ENCODE measurements at regions of chr17 and their contacts with region 1.

Region 1: DNA sequence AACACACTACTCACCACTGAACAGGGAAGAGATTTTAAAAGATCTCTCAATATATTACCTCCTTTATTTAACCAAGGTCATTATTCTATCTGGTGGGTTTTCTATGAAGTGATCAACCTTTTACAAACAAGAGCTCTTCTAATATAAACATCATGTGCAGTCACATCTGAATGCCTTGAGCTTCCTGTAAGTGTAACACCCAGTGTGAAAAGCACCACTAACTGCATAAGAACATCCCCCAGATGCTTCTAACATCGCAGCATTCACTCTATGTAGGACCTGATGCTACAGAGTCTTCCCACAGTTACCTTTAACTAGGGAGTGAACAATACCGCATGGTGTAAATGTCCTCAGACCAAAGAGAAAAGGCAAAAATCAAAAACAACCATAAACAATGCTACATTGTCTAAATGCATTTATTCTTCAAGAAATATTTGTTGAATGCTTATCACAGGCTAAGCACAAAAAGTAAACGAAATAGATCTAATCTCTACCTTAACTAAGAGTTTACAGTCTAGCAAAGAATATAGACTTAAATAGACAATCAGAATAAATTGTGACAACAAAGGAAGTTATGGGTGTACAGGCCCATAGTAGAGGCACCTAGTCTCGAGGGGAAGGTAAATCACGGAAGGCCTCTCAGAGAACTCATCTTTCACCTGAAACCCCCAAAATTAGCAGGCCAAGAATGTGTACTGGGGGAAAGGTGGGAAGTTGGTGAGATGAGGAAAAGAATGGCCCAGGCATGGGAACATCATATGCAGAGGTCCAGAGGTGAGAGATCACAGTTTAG is 16.2 kb downstream of the SKAP1 start:
- DNase-seq: no peak

Region 2: GRCh38 chr17:48215583-48216139 is 198.1 kb before region 1 on chr17:
- intact Hi-C with region 1: no loop called
- DNase-seq: no peak

Region 3: DNA sequence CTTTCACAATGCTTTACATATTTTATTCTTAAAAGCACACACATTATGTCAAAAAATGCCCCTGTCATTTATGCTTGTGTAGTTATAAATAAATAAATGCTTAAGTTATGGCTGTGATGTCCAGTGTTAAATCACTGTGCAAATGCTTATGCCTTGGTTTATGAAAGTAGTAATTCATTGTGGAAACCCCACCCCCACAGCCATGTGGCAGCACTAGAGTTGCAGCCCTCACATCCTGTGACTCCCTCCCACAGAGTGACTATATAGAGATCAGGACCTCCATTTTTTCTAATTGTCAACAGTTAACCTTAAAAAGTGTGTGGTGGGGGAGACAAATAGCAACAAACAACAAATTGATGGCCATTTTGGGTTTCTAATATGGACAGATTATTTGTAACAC is 13.8 kb after region 1 on chr17:
- intact Hi-C with region 1: loop called in 1 of 2 experiments (anchors 1 kb)
- DNase-seq: no peak

Region 4: GRCh38 chr17:48541577-48542113 is 127.8 kb after region 1 on chr17:
- intact Hi-C with region 1: no loop called
- DNase-seq: peak; percentile 93

Measured in posterior vena cava (tissue), 2 donors.